ENCODE measurements at regions of chr3 and their contacts with region 1.

Region 1: GRCh38 chr3:185983495-185984141 is 45.8 kb upstream of the TRA2B start:
- DNase-seq: peak; percentile 70
- ATAC-seq: peak; percentile 93 to 95
- H3K4me3 ChIP-seq: no peak overlapping the region
- H3K27ac ChIP-seq: no peak overlapping the region
- H3K4me1 ChIP-seq: peaks cover 8% of the 10 kb centered on the region
- H3K27me3 ChIP-seq: no peaks in the 10 kb centered on the region
- CTCF ChIP-seq: peak; percentile 93

Region 2: DNA sequence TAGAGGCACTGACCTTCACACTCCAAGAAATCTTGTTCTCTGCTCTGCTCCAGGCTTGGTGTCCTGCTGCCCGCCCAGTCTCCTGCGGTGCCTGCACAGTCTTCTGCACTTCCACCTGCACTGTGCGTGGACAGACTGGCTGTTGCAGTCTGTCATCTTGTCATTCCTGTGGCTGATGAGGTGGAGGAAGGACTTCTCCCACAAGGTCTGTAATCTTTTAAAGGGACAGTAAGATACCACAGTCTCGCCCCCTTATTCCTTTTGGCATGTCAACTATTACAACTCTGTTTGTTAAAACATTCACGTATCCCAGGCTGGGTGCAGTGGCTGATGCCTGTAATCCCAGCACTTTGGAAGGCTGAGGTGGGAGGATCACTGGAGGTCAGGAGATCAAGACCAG is 104.7 kb before region 1 on chr3:
- intact Hi-C with region 1: no loop called
- DNase-seq: no peak
- ATAC-seq: no peak
- H3K4me3 ChIP-seq: no peak overlapping the region
- H3K27ac ChIP-seq: no peak overlapping the region
- H3K4me1 ChIP-seq: no peaks in the 10 kb centered on the region
- H3K27me3 ChIP-seq: peaks cover 5% of the 10 kb centered on the region
- CTCF ChIP-seq: no peak

Region 3: GRCh38 chr3:186241910-186242821 is 258.5 kb after region 1 on chr3:
- intact Hi-C with region 1: loop called (anchors 10 kb)
- DNase-seq: peak; percentile 85
- ATAC-seq: peak; percentile 89 to 93
- H3K4me3 ChIP-seq: peak overlapping the region; percentile 43
- H3K27ac ChIP-seq: peak overlapping the region; percentile 12
- H3K4me1 ChIP-seq: peaks cover 29% of the 10 kb centered on the region
- H3K27me3 ChIP-seq: no peaks in the 10 kb centered on the region
- CTCF ChIP-seq: peak; percentile 57

Measured in lower lobe of right lung (tissue), 2 donors.